Naive thymus-derived CD4-positive, alpha-beta T cell (primary cell): ENCODE measurements at regions of chr17 and their contacts with region 1.

Region 1: DNA sequence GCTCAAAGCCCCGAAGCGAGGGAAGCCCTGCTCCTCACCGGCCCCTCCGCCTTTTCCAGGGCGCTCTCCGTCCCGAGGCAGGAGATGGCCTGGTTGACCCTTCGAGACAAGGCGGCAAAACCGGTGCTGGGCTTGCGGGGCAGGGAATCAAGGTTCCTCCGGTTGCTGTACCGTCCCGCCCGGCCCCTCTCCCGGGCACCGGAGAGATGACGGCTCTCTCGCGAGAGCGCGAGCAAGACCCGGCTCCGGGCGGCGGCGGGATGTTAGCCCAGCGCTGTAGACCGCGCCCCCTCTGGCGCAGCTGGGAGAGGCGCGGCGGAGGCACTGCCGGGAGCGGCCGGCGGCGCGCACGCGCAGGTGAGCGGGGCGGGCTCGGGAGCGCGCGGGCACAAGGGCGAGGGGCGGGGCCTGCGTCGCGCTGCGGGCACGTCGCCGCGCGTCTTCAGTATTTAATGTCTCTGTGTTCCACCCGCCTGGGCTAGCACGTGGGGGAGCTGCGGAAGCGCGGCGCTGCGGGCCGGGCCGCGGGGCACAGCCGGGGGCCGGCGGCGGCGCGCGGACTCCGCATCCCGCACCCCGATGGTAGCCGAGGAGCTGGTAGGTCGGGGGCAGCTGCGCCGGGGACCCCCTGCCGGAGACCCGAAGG is at the start of gene AKAP1:
- DNase-seq: peak; percentile 91 to 98 (median 97)
- ATAC-seq: peak; percentile 95
- H3K4me3 ChIP-seq: peak within 1 kb of the TSS; percentile 96
- H3K4me3 Mint-ChIP-seq: peak within 1 kb of the TSS; percentile 89 to 95 (median 92)
- H3K27ac ChIP-seq: peak within 1 kb of the TSS; percentile 91
- H3K27ac Mint-ChIP-seq: peak within 1 kb of the TSS; percentile 86 to 95 (median 93)
- H3K4me1 ChIP-seq: peaks cover 9 to 12% of the 10 kb centered on the region in 2 donors
- H3K4me1 Mint-ChIP-seq: peaks cover 27 to 43% (median 34%) of the 10 kb centered on the region in 7 donors
- H3K27me3 ChIP-seq: no peaks in the 10 kb centered on the region
- H3K27me3 Mint-ChIP-seq: peaks cover 0 to 12% (median 0%) of the 10 kb centered on the region in 5 donors
- total RNA-seq, gene AKAP1: 22.2 to 35.8 (median 34.3) TPM

Region 2: GRCh38 chr17:55421179-55421934 is 1663.6 kb before region 1 on chr17 and contains the start of gene MMD:
- CTCF ChIA-PET with region 1: no interaction called
- POLR2A ChIA-PET with region 1: no interaction called
- intact Hi-C with region 1: loop called in 1 of 2 experiments (anchors 5 kb)
- DNase-seq: peak in 6 of 9 donors; percentile 12 to 50 (median 24)
- ATAC-seq: no peak
- H3K4me3 ChIP-seq: peak within 1 kb of the TSS; percentile 89
- H3K4me3 Mint-ChIP-seq: peak within 1 kb of the TSS; percentile 89 to 96 (median 90)
- H3K27ac ChIP-seq: peak within 1 kb of the TSS; percentile 87
- H3K27ac Mint-ChIP-seq: peak within 1 kb of the TSS; percentile 83 to 98 (median 94)
- H3K4me1 ChIP-seq: peaks cover 11 to 21% of the 10 kb centered on the region in 2 donors
- H3K4me1 Mint-ChIP-seq: peaks cover 32 to 47% (median 43%) of the 10 kb centered on the region in 7 donors
- H3K27me3 ChIP-seq: no peaks in the 10 kb centered on the region
- H3K27me3 Mint-ChIP-seq: peaks cover 8 to 30% (median 19%) of the 10 kb centered on the region in 5 donors
- total RNA-seq, gene MMD: 6.6 to 35.3 (median 11.2) TPM

Region 3: GRCh38 chr17:56913864-56914640 is 170.9 kb before region 1 on chr17 and contains the start of gene TRIM25:
- CTCF ChIA-PET with region 1: interaction called, 3 read pairs
- POLR2A ChIA-PET with region 1: no interaction called
- intact Hi-C with region 1: loop called in 1 of 2 experiments (anchors 1 kb)
- DNase-seq: peak; percentile 57 to 90 (median 79)
- ATAC-seq: peak; percentile 91
- H3K4me3 ChIP-seq: peak within 1 kb of the TSS; percentile 93
- H3K4me3 Mint-ChIP-seq: peak within 1 kb of the TSS; percentile 80 to 97 (median 91)
- H3K27ac ChIP-seq: peak within 1 kb of the TSS; percentile 90
- H3K27ac Mint-ChIP-seq: peak within 1 kb of the TSS; percentile 88 to 95 (median 93)
- H3K4me1 ChIP-seq: peaks cover 29 to 35% of the 10 kb centered on the region in 2 donors
- H3K4me1 Mint-ChIP-seq: peaks cover 20 to 52% (median 46%) of the 10 kb centered on the region in 7 donors
- H3K27me3 ChIP-seq: no peaks in the 10 kb centered on the region
- H3K27me3 Mint-ChIP-seq: no peaks in the 10 kb centered on the region
- total RNA-seq, gene TRIM25: 45.9 to 133 (median 61.8) TPM

Region 4: DNA sequence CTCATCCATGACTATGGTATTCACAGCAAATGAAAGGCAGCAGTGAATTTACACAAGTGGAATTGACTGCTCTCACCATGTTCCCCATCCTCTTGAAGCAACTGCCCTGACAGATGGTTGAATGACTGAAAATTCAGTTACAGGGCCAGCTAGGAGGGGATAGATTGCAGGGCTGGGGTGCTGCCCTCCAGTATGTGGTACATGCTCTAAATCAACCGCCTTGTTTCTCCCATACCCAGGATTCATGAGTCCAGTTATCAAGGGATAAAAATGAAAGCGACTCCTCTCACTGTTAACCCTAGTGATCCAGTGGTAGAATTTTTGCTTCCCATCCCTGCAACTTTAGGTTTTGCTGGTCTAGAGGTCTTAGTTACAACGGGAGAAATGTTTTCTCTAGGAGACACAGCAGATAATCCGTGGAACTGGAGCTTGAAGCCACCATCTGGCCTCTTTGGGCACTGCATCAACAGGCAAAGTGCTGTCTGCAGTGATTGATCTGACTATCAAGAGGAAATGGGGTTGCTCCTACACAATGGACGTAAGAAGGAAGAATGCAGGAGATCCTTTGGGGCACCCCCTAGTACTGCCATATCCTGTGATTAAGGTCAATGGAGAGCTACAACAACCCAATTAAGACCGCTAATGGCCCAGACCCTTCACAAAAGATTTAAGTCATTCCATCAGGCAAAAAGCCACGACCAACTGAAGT is 75.0 kb before region 1 on chr17:
- CTCF ChIA-PET with region 1: no interaction called
- POLR2A ChIA-PET with region 1: no interaction called
- intact Hi-C with region 1: loop called in 1 of 2 experiments (anchors 1 kb)
- DNase-seq: peak; percentile 10 to 54 (median 41)
- ATAC-seq: peak; percentile 91
- H3K4me3 ChIP-seq: no peak overlapping the region
- H3K4me3 Mint-ChIP-seq: peak overlapping the region in 9 of 10 donors; percentile 13 to 84 (median 66)
- H3K27ac ChIP-seq: no peak overlapping the region
- H3K27ac Mint-ChIP-seq: peak overlapping the region in 3 of 9 donors; percentile 1 to 57 (median 10)
- H3K4me1 ChIP-seq: no peaks in the 10 kb centered on the region
- H3K4me1 Mint-ChIP-seq: peaks cover 6 to 15% (median 10%) of the 10 kb centered on the region in 7 donors
- H3K27me3 ChIP-seq: no peaks in the 10 kb centered on the region
- H3K27me3 Mint-ChIP-seq: peaks cover 0 to 17% (median 0%) of the 10 kb centered on the region in 5 donors

Region 5: GRCh38 chr17:58082870-58083490 is 998.1 kb after region 1 on chr17 and contains the start of gene DYNLL2:
- CTCF ChIA-PET with region 1: no interaction called
- POLR2A ChIA-PET with region 1: no interaction called
- intact Hi-C with region 1: loop called (anchors 1 to 10 kb)
- DNase-seq: peak; percentile 74 to 88 (median 87)
- ATAC-seq: peak; percentile 91
- H3K4me3 ChIP-seq: peak within 1 kb of the TSS; percentile 88
- H3K4me3 Mint-ChIP-seq: peak within 1 kb of the TSS; percentile 88 to 95 (median 92)
- H3K27ac ChIP-seq: peak within 1 kb of the TSS; percentile 94
- H3K27ac Mint-ChIP-seq: peak within 1 kb of the TSS; percentile 81 to 95 (median 90)
- H3K4me1 ChIP-seq: peaks cover 23 to 34% of the 10 kb centered on the region in 2 donors
- H3K4me1 Mint-ChIP-seq: peaks cover 26 to 40% (median 34%) of the 10 kb centered on the region in 7 donors
- H3K27me3 ChIP-seq: no peaks in the 10 kb centered on the region
- H3K27me3 Mint-ChIP-seq: peaks cover 0 to 31% (median 0%) of the 10 kb centered on the region in 5 donors
- total RNA-seq, gene DYNLL2: 30.1 to 39.1 (median 35.1) TPM

Region 6: GRCh38 chr17:58692239-58693055 is 1607.5 kb after region 1 on chr17 and contains the start of gene RAD51C:
- CTCF ChIA-PET with region 1: no interaction called
- POLR2A ChIA-PET with region 1: no interaction called
- intact Hi-C with region 1: loop called in 1 of 2 experiments (anchors 10 kb)
- DNase-seq: peak; percentile 66 to 86 (median 82)
- ATAC-seq: peak; percentile 99
- H3K4me3 ChIP-seq: peak within 1 kb of the TSS; percentile 75
- H3K4me3 Mint-ChIP-seq: peak within 1 kb of the TSS; percentile 85 to 99 (median 94)
- H3K27ac ChIP-seq: peak within 1 kb of the TSS; percentile 77
- H3K27ac Mint-ChIP-seq: peak within 1 kb of the TSS; percentile 87 to 96 (median 89)
- H3K4me1 ChIP-seq: peaks cover 12 to 17% of the 10 kb centered on the region in 2 donors
- H3K4me1 Mint-ChIP-seq: peaks cover 20 to 37% (median 31%) of the 10 kb centered on the region in 7 donors
- H3K27me3 ChIP-seq: no peaks in the 10 kb centered on the region
- H3K27me3 Mint-ChIP-seq: peaks cover 0 to 2% (median 0%) of the 10 kb centered on the region in 5 donors
- total RNA-seq, gene RAD51C: 11.4 to 52.6 (median 27.8) TPM